ENCODE measurements at regions of chr21 and their contacts with region 1.

Region 1: GRCh38 chr21:45973659-45974072 is 7.9 kb upstream of the COL6A1 start:
- DNase-seq: peak in 1 of 2 experiments; percentile 43
- H3K4me3 ChIP-seq: no peak overlapping the region
- H3K27ac ChIP-seq: no peak overlapping the region
- H3K4me1 ChIP-seq: peaks cover 16% of the 10 kb centered on the region
- H3K27me3 ChIP-seq: no peaks in the 10 kb centered on the region
- CTCF ChIP-seq: peak; percentile 36; the same call in 1 of the 2 replicates

Region 2: GRCh38 chr21:45228171-45228641 is 745.5 kb before region 1 on chr21:
- CTCF ChIA-PET with region 1: interaction called, 12 read pairs
- POLR2A ChIA-PET with region 1: no interaction called
- intact Hi-C with region 1: no loop called
- DNase-seq: peak; percentile 58 to 79
- H3K4me3 ChIP-seq: no peak overlapping the region
- H3K27ac ChIP-seq: no peak overlapping the region
- H3K4me1 ChIP-seq: peaks cover 14% of the 10 kb centered on the region; the same call in 1 of the 2 replicates
- H3K27me3 ChIP-seq: no peaks in the 10 kb centered on the region
- CTCF ChIP-seq: no peak

Region 3: GRCh38 chr21:46097336-46098293 is 123.9 kb after region 1 on chr21 and contains the start of gene COL6A2:
- CTCF ChIA-PET with region 1: no interaction called
- POLR2A ChIA-PET with region 1: no interaction called
- intact Hi-C with region 1: loop called (anchors 5 kb)
- DNase-seq: peak in 1 of 2 experiments; percentile 49
- H3K4me3 ChIP-seq: peak within 1 kb of the TSS; percentile 56; the same call in 1 of the 2 replicates
- H3K27ac ChIP-seq: no peak within 1 kb of the TSS
- H3K4me1 ChIP-seq: no peaks in the 10 kb centered on the region; the same call in 1 of the 2 replicates
- H3K27me3 ChIP-seq: no peaks in the 10 kb centered on the region
- CTCF ChIP-seq: peak; percentile 26; the same call in 1 of the 2 replicates
- total RNA-seq, gene COL6A2: 22.0 and 25.7 TPM in 2 replicates

Measured in PC-9 (cell line).